CD4-positive, alpha-beta T cell (primary cell): ENCODE measurements at regions of chr11 and their contacts with region 1.

Region 1: GRCh38 chr11:102306048-102306585 is 11.2 kb upstream of the BIRC3 start:
- DNase-seq: peak in 10 of 14 experiments; percentile 34 to 66 (median 40)
- ATAC-seq: peak; percentile 72
- H3K4me3 ChIP-seq: no peak overlapping the region
- H3K4me3 Mint-ChIP-seq: peak overlapping the region; percentile 69
- H3K27ac ChIP-seq: peak overlapping the region; percentile 76 to 80
- H3K27ac Mint-ChIP-seq: peak overlapping the region; percentile 98
- H3K4me1 ChIP-seq: peaks cover 54% of the 10 kb centered on the region
- H3K4me1 Mint-ChIP-seq: peaks cover 68% of the 10 kb centered on the region
- H3K27me3 ChIP-seq: no peaks in the 10 kb centered on the region
- H3K27me3 Mint-ChIP-seq: no peaks in the 10 kb centered on the region
- CTCF ChIP-seq: no peak

Region 2: DNA sequence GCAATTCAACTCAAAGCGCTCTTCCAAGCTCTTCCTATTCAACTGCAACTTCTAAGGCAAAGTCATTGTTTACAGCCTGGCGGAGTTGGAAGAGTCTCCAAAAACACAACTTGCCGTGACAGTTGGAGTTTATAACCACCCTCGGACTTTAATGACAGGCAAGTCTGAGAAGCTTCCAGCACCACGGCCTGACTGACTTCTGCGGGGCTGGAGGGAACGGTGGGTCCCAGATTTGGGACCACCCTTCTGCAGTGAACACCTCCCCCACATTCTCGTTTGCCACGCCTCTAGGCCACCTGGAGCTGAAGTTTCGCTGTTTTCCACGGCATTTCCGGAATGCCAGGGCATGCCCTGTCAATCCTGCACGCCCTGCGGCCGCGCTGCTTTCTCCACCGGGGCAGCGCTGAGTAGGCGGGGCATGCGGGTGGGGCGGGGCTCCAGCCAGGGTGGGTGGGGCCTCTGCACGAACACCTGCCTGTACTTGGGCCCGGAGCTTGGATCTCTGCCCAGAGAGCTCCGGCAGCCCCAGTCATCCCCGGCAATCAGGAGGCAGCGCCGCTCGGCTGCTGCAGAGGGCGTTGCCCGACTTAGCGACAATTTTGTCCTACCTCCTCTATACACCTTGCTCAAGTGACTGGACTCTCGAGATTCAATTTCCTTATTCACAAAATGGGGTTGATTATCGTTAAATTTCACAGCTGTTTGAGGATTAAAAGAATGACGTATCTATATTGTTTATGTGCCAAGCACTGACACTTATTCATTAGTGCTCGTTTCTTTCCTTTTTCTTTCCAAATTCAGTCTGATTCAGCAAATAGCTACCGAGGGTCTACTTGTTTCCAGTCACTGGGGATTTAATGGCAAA is 37.6 kb before region 1 on chr11:
- CTCF ChIA-PET with region 1: no interaction called
- POLR2A ChIA-PET with region 1: no interaction called
- intact Hi-C with region 1: no loop called
- DNase-seq: peak; percentile 71 to 95 (median 82)
- ATAC-seq: peak; percentile 99
- H3K4me3 ChIP-seq: peak overlapping the region; percentile 49
- H3K4me3 Mint-ChIP-seq: peak overlapping the region; percentile 83
- H3K27ac ChIP-seq: no peak overlapping the region
- H3K27ac Mint-ChIP-seq: peak overlapping the region; percentile 78
- H3K4me1 ChIP-seq: peaks cover 20% of the 10 kb centered on the region
- H3K4me1 Mint-ChIP-seq: peaks cover 41% of the 10 kb centered on the region
- H3K27me3 ChIP-seq: no peaks in the 10 kb centered on the region
- H3K27me3 Mint-ChIP-seq: no peaks in the 10 kb centered on the region
- CTCF ChIP-seq: peak; percentile 59

Region 3: DNA sequence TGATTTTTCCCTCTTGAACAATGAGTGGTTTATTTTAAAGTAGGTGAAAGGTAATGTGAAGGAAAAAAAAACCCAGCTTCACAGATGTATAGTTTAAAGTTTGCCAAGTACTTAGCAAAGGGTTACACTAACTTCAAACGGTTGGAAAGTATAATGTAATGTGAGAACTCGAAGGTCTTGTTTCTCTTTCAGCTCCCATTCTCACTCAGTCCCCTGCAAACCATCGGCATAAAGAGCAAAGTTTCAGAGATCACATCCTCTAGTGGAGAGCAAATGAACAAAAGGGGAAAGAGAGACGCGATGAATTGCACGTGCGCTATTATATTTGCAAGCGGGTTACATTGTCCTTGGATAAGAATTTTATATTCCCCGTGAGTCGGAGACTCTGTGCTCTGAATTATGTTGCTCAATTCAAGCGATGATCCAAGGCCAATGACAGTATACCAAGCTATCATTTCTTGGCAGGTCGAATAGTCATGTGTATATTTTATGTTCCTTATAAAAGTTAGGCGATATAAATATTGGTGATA is 26.4 kb before region 1 on chr11:
- CTCF ChIA-PET with region 1: no interaction called
- POLR2A ChIA-PET with region 1: no interaction called
- intact Hi-C with region 1: no loop called
- DNase-seq: no peak
- ATAC-seq: no peak
- H3K4me3 ChIP-seq: no peak overlapping the region
- H3K4me3 Mint-ChIP-seq: no peak overlapping the region
- H3K27ac ChIP-seq: no peak overlapping the region
- H3K27ac Mint-ChIP-seq: no peak overlapping the region
- H3K4me1 ChIP-seq: no peaks in the 10 kb centered on the region
- H3K4me1 Mint-ChIP-seq: peaks cover 5% of the 10 kb centered on the region
- H3K27me3 ChIP-seq: no peaks in the 10 kb centered on the region
- H3K27me3 Mint-ChIP-seq: peaks cover 17% of the 10 kb centered on the region
- CTCF ChIP-seq: no peak

Region 4: DNA sequence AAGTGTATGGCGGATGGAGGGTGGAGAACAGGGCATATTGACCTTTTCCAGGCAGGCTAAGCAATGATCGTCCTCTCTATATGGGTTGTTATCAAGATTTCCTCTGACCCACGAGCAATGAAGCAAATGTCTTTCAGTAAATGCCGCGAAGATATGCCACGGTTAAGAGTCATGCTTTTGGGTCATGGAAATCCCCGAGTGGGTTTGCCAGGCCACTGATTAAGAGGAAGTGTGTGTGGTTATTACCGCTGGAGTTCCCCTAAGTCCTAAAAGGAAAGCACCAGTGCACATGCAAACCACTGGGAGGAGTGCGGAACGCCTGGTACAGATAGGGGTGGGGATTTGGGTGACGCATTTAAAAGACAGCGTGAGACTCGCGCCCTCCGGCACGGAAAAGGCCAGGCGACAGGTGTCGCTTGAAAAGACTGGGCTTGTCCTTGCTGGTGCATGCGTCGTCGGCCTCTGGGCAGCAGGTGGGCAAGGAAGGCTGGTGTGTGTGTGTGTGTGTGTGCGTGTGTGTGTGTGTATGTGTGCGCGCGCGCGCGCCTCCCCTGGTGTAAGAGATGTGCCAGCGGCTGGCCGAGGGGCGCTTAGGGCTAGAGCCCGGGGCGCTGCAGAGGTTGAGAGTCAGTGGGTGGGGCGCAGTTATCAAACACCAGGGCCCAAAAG is 11.1 kb after region 1 on chr11 and contains the start of gene BIRC3:
- CTCF ChIA-PET with region 1: interaction called, 27 read pairs
- POLR2A ChIA-PET with region 1: interaction called, 94 read pairs
- intact Hi-C with region 1: loop called in 1 of 2 experiments (anchors 1 kb)
- DNase-seq: peak; percentile 74 to 99 (median 88)
- ATAC-seq: peak; percentile 83
- H3K4me3 ChIP-seq: peak within 1 kb of the TSS; percentile 91
- H3K4me3 Mint-ChIP-seq: peak within 1 kb of the TSS; percentile 97
- H3K27ac ChIP-seq: peak within 1 kb of the TSS; percentile 95 to 96
- H3K27ac Mint-ChIP-seq: peak within 1 kb of the TSS; percentile 93
- H3K4me1 ChIP-seq: peaks cover 42% of the 10 kb centered on the region
- H3K4me1 Mint-ChIP-seq: peaks cover 75% of the 10 kb centered on the region
- H3K27me3 ChIP-seq: no peaks in the 10 kb centered on the region
- H3K27me3 Mint-ChIP-seq: no peaks in the 10 kb centered on the region
- CTCF ChIP-seq: peak; percentile 34
- total RNA-seq, gene BIRC3: 115 to 124 TPM

Region 5: DNA sequence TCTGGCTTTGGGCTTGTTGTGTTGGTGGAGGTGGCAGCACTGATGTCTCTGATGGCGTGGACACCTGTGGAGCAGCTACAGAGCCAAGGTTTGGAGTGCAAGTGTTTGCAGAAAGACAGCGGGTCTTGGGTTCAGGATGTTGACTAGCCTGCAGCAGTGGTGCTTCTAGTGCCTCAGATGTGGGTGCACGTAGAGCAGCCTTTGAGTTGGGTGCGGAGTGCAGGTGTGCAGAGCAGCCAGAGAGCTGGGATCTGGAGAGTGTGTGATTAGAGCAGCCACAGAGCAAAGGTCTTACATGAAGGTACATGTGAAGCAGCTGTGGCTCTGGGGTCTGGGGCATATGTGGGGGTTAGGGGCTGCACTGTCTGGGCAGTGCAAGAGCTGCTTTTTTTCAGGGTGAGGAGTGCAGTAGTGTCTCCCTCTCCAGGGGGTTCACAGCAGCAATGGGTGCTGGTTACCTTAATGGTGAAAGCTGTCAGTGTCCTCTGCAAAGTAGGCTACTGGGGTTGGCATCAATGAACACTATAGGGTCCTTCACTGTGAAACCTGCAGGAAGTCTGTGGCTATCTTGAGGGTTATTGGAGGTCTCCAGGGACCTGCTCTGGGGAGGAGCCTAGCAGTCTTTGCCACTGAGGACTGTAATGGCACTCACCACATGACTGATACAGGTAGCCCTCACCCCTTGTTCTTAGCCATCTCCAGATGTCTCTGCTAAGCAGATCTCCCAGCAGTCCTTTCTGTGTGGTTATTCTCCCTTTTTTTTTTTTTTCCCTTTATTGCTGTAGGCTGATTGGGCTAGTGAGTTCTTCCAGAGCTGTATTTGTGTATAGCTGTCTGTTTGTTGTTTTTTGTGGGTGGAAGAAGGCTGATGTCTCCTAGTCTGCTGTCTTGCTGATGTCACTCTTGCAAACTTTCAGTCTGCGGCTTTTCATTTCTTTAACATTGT is 55.2 kb after region 1 on chr11:
- CTCF ChIA-PET with region 1: interaction called, 4 read pairs
- POLR2A ChIA-PET with region 1: no interaction called
- intact Hi-C with region 1: loop called in 1 of 2 experiments (anchors 5 kb)
- DNase-seq: peak; percentile 35 to 85 (median 60)
- ATAC-seq: peak; percentile 74
- H3K4me3 ChIP-seq: peak overlapping the region; percentile 24
- H3K4me3 Mint-ChIP-seq: peak overlapping the region; percentile 44
- H3K27ac ChIP-seq: peak overlapping the region; percentile 46 to 76
- H3K27ac Mint-ChIP-seq: peak overlapping the region; percentile 95
- H3K4me1 ChIP-seq: peaks cover 17% of the 10 kb centered on the region
- H3K4me1 Mint-ChIP-seq: peaks cover 49% of the 10 kb centered on the region
- H3K27me3 ChIP-seq: no peaks in the 10 kb centered on the region
- H3K27me3 Mint-ChIP-seq: no peaks in the 10 kb centered on the region
- CTCF ChIP-seq: no peak

Region 6: GRCh38 chr11:102438311-102439062 is 132.4 kb after region 1 on chr11:
- CTCF ChIA-PET with region 1: no interaction called
- POLR2A ChIA-PET with region 1: no interaction called
- intact Hi-C with region 1: no loop called
- DNase-seq: peak in 8 of 14 experiments; percentile 38 to 60 (median 48)
- ATAC-seq: no peak
- H3K4me3 ChIP-seq: no peak overlapping the region
- H3K4me3 Mint-ChIP-seq: peak overlapping the region; percentile 40
- H3K27ac ChIP-seq: no peak overlapping the region
- H3K27ac Mint-ChIP-seq: peak overlapping the region; percentile 40
- H3K4me1 ChIP-seq: peaks cover 27% of the 10 kb centered on the region
- H3K4me1 Mint-ChIP-seq: peaks cover 92% of the 10 kb centered on the region
- H3K27me3 ChIP-seq: no peaks in the 10 kb centered on the region
- H3K27me3 Mint-ChIP-seq: no peaks in the 10 kb centered on the region
- CTCF ChIP-seq: no peak